BJ (cell line): ENCODE measurements at regions of chr17 and their contacts with region 1.

Region 1: DNA sequence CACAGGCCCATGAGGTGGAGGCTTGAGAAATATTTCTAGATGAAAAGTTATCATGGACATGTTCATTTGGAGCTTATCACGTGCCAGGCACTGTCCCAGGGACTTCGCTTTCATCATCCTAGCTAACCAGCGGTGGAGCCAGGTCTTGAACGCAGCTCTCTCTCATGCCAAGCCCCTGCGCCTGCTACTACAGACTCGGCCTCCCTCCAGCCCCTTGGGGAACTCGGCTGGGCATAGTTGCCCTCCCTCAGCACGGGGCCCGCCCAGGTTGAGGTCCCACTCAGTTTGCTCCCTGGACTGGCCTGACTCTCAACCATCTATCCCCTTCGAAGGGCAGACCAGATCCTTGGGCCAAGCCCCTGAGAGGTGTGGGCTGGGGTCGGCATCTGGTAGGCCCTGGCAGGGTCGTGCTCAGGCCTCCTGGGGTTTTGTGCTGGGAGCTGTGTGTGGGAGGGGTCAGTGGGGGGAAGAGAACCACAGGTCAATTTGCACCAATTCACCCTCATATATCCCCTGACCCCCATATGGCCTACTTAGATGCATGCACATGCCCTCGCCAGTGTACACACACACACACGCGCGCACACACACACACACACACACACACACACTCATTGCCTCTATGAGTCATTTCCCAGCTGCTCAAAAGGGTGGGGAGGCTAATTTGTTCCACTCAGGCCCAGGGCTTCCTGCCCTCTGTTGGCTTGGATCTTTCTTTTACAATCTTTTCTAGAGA is 12.1 kb upstream of the SCN4A start:
- DNase-seq: peak; percentile 54
- H3K4me3 ChIP-seq: no peak overlapping the region
- H3K27me3 ChIP-seq: peaks cover 4% of the 10 kb centered on the region
- CTCF ChIP-seq: no peak

Region 2: DNA sequence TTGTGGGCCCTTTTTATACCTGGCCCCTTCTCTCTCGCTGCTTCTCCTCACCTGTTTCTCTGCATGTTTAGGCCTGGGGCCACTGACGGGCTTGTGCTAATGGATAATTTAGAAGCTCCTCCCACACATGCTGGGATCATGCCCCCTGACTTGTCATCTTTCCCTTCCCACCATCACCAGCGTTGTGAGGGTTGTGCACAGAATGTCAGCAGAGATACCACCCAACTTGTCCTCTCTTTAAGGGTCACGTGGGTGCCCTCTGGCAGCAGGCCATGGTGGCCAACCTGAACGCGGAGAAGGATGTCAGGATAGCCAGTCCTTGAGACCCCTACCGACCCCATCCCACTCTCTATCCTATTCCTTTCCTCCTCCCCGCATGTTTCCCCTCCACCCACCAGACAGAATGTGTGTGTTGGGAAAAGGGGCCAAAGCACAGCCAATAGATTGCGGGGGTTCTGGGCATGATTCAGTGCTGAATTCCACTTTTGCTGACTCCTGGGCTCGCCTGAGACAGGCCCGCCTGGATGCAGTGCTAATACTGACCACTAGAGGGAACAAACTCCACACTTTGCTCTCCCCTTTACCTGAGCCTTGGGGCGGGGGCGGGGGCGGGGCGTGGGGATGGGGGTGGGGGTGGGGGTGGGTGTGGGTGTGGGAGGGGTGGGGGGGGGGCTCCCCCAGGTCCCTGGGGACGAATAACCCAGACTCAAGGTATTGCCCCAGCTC is 102.8 kb before region 1 on chr17 and contains the start of gene GH2:
- CTCF ChIA-PET with region 1: no interaction called
- POLR2A ChIA-PET with region 1: no interaction called
- DNase-seq: no peak
- H3K4me3 ChIP-seq: no peak within 1 kb of the TSS
- H3K27me3 ChIP-seq: peaks cover 6% of the 10 kb centered on the region
- CTCF ChIP-seq: peak; percentile 78
- polyA plus RNA-seq, gene GH2: not detected in 2 replicates

Region 3: DNA sequence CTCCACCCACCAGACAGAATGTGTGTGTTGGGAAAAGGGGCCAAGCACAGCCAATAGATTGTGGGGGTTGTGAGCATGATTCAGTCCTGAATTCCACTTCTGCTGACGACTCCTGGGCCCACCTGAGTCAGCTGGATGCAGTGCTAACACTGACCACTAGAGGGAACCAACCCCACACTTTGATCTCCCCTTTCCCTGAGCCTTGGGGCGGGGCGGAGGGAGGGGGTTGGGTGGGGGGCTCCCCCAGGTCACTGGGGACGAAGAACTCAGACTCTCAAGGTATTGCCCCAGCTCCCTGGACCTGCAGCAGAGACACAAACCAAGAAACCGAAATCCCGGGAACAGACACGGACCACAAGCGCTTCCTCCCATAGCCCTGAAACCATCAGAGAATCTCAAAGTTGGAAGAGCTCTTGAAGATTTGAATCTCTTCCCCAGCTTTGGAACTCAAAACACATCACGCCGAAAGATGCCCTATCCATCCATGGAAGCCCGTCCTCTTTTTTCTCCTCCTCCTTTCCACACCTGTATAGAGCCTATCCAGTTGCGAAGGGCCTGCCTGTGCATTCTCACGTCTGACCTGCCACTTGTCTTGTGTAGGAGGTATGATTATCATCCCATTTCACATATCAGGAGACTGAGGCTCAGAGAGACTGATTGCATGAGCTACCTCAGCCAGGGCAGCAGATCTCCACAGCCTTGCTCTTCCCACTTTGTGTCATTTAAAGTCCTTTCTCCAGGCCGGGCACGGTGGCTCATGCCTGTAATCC is 73.0 kb before region 1 on chr17:
- CTCF ChIA-PET with region 1: interaction called, 53 read pairs
- POLR2A ChIA-PET with region 1: no interaction called
- DNase-seq: no peak
- H3K4me3 ChIP-seq: no peak overlapping the region
- H3K27me3 ChIP-seq: peaks cover 10% of the 10 kb centered on the region
- CTCF ChIP-seq: peak; percentile 72

Region 4: GRCh38 chr17:63974594-63975192 is 10.1 kb before region 1 on chr17:
- CTCF ChIA-PET with region 1: interaction called, 11 read pairs
- POLR2A ChIA-PET with region 1: no interaction called
- DNase-seq: no peak
- H3K4me3 ChIP-seq: no peak overlapping the region
- H3K27me3 ChIP-seq: no peaks in the 10 kb centered on the region
- CTCF ChIP-seq: no peak